AG04450 (cell line): ENCODE measurements at regions of chr10 and their contacts with region 1.

Region 1: DNA sequence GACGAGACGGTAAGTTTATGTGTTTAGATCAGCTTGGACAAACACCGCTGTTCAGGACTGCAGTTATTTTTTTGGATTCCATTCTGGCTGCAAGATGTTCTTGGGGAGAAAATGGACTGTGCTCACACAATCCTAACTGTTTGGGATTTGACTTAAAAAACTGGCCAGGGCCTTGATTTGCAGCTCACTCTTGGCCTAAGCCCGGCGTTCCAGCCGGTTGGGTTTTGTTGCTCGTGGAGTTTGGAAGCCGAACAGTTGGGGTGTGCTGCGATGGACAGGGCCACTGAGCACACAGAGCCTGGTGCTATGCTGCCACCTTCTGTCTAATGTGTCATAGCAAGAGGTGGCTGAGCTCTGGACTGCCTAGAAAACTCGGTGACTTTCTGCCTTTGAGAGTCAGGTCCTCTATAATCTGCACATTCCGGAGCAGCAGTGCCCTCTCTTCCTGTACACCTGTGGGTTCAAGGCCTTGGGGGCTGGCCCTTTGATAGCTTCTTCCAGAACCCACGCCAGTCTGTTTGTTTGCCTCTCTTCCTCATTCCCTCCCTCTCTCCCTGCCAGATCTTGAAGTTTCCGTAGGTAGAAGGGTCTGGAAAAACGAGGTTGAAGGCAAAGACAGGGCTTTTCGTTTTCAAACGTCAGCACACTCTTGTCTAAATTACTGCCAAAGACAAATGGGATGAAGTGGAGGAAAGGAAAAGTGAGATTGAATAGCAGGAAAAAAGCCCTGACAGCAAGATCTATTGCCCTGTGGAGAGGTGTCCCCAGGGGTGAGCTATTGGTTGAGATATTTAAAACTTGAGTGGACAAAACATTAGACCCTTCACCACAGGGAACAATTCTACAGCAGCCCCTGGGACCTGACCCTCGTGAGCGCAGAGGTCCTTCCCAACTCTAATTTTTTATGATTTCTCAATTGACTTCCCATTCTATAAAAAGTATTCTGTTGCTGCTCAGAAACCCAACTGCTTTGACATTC is 167.5 kb upstream of the HABP2 start:
- DNase-seq: peak; percentile 63
- H3K4me3 ChIP-seq: no peak overlapping the region
- H3K27ac ChIP-seq: peak overlapping the region; percentile 21
- H3K27me3 ChIP-seq: peaks cover 7% of the 10 kb centered on the region
- CTCF ChIP-seq: peak; percentile 89

Region 2: DNA sequence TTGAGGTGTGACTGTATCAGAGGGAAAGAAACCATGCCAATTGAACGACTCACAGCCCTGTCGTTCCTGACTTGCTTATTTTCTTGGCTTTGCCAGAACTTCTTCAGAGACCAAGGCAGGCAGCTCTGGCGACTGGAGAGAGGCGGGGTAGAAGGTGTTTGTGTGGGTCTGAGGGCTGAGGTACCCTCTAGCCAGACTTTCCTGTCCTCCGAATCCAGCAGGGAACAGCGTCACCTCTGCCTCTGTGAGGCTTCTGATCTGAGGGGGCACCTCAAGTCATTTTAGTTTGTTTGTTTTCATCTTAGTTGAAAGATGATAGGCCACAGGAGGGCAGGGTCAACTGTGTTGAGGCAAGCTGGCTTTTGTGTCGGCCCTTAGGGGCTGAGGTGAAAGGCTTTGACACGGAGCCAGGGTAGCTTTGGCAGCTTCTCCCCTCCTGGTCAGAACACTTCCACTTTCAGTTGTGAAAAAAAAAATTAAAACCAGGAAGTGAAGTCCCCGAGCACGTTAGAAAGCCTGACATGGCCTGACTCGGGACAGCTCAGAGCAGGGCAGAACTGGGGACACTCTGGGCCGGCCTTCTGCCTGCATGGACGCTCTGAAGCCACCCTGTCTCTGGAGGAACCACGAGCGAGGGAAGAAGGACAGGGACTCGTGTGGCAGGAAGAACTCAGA is 1009.5 kb before region 1 on chr10:
- CTCF ChIA-PET with region 1: interaction called, 10 read pairs
- POLR2A ChIA-PET with region 1: no interaction called
- DNase-seq: no peak
- H3K4me3 ChIP-seq: 0 out of 2 replicates have a peak overlapping the region, but pooled peaks have one; percentile 5
- H3K27ac ChIP-seq: peak overlapping the region; percentile 0
- H3K27me3 ChIP-seq: no peaks in the 10 kb centered on the region
- CTCF ChIP-seq: no peak

Region 3: DNA sequence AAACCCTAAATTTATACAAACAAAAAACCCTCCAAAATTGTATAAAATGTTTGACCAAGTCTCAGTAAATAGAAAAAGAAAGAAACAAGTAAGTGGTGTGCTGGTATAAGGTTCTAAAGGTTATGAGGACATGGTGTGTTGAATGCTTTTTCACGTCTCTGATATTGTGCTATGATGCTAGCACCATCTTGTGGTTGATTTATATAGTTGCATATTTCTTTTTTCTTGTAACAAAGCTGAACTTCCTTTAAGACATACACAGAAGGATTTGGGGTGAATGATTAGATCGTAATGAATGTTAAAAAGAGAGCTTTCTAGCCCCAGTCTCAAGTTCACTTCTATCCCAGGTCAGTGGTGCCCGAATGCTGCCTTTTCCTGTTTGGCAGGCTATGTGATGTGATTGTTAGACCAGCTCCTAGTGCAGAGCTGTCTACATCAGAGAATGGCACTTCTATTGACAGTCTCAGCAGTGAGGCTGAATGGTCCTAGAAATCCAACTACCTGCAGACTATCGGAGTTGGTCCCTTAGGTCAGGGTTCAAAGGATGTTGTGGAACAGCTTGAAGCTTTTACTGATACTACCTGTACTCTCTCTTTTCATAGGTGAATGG is 913.3 kb before region 1 on chr10:
- CTCF ChIA-PET with region 1: interaction called, 120 read pairs
- POLR2A ChIA-PET with region 1: no interaction called
- DNase-seq: peak; percentile 23
- H3K4me3 ChIP-seq: no peak overlapping the region
- H3K27ac ChIP-seq: no peak overlapping the region
- H3K27me3 ChIP-seq: no peaks in the 10 kb centered on the region
- CTCF ChIP-seq: peak; percentile 66

Region 4: DNA sequence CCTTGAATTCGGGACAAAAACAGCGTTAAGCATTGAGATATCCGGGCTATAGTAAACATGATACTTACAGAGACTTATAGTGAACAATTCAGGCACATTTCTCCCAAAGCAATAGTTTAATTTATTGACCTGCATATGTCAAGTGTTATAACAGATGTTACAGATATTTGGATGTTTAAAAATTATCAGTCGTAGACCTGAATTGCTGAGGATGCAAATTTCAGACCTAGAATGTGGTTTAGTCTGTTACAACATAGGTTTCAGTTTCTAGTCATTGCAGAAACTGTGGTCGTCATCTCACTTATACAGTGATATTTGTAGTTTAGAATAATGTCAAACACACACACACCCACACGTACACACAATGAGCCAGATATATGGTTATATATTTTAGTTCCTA is 853.1 kb before region 1 on chr10:
- CTCF ChIA-PET with region 1: interaction called, 21 read pairs
- POLR2A ChIA-PET with region 1: no interaction called
- DNase-seq: no peak
- H3K4me3 ChIP-seq: peak overlapping the region; percentile 45
- H3K27ac ChIP-seq: no peak overlapping the region
- H3K27me3 ChIP-seq: no peaks in the 10 kb centered on the region
- CTCF ChIP-seq: no peak

Region 5: DNA sequence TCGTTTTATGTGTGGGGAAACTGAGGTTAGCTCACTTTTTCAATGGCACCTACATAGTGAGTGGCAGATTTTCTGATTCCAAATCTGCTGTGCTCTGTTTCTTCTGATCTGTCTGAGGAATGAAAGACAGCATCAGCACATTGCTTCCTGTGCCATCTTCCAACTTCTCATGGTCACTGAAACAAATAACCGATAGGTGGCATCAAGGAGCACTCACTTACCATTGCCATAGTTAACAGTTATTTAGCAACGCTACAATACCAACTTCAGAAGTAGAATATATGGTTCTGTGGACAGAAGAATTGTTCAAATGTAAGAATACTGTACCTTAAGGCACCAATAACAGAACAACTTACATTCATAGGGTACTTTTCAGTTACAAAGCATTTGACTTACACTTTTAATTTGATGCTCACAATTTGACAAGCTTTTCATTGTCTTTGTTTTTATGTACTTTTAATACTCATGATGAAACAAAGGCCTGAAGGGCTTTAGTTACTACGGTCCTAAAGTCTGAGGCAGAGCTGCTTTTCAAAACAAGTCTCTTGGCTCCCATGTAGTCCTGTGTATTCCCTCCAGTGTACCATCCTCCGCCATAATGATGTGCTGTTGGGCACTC is 664.1 kb before region 1 on chr10:
- CTCF ChIA-PET with region 1: interaction called, 20 read pairs
- POLR2A ChIA-PET with region 1: interaction called, 13 read pairs
- DNase-seq: no peak
- H3K4me3 ChIP-seq: no peak overlapping the region
- H3K27ac ChIP-seq: no peak overlapping the region
- H3K27me3 ChIP-seq: no peaks in the 10 kb centered on the region
- CTCF ChIP-seq: peak; percentile 73

Region 6: DNA sequence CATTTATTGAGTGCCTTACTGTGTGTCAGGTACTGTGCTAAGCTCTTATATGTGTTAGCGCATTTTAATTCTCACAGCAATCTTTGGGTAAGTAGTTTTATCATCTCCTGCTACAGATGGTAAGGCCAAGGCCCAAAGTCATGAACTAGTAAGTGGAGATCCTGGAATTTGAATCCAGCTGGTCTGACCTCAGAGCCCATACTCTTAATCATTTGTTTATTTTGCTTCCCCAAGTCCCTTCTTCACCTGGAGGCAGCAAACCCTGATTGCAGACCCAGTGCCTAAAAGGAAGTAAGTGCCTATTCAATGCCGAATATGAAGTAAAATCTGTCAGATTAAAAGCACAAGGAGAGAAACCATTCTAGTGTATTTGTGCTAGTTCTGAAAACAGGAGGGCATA is 618.2 kb before region 1 on chr10:
- CTCF ChIA-PET with region 1: interaction called, 11 read pairs
- POLR2A ChIA-PET with region 1: no interaction called
- DNase-seq: no peak
- H3K4me3 ChIP-seq: no peak overlapping the region
- H3K27ac ChIP-seq: no peak overlapping the region
- H3K27me3 ChIP-seq: no peaks in the 10 kb centered on the region
- CTCF ChIP-seq: no peak

Region 7: GRCh38 chr10:113027574-113028455 is 357.5 kb before region 1 on chr10:
- CTCF ChIA-PET with region 1: no interaction called
- POLR2A ChIA-PET with region 1: no interaction called
- DNase-seq: no peak
- H3K4me3 ChIP-seq: no peak overlapping the region
- H3K27ac ChIP-seq: no peak overlapping the region
- H3K27me3 ChIP-seq: no peaks in the 10 kb centered on the region
- CTCF ChIP-seq: 0 out of 2 replicates have a peak, but pooled peaks have one; percentile 4

Region 8: DNA sequence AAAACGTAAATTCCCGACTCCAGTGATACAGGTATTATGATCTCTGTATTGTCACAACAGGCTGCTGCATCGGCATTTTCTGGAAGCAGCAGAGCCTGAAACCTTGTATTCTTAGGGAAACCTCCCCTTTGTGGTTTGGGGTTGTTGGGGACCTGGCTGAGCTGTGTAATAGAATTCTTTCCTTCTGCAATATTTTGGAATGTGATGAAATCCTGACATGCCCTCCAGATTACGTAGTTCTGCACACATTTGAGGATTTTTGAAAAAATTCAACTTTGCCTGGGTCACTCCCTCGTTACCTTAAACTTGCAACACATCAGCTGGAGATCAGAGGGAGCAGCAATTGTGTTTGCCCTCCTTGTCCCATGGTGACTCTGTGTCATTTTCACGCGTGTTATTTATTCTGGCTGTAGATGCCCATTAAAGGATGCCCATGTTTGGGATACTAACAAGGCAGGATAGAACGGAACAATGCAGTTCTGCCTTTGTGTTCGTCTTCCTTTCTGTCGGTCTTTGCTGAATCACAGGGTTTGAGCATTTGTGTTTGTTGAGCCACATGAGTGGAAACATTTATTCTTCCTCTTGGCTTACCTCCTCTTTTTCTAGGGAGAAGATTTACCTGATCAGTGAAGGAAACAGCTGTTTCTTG is 253.6 kb before region 1 on chr10:
- CTCF ChIA-PET with region 1: interaction called, 19 read pairs
- POLR2A ChIA-PET with region 1: no interaction called
- DNase-seq: peak; percentile 42
- H3K4me3 ChIP-seq: no peak overlapping the region
- H3K27ac ChIP-seq: peak overlapping the region; percentile 3
- H3K27me3 ChIP-seq: no peaks in the 10 kb centered on the region
- CTCF ChIP-seq: no peak